ENCODE measurements at regions of chr1 and their contacts with region 1.

Region 1: GRCh38 chr1:157646144-157646543 is 48.3 kb upstream of the FCRL4 start:
- DNase-seq: no peak
- ATAC-seq: no peak
- H3K4me3 ChIP-seq: no peak overlapping the region
- H3K27ac ChIP-seq: no peak overlapping the region
- H3K4me1 ChIP-seq: no peaks in the 10 kb centered on the region
- H3K27me3 ChIP-seq: no peaks in the 10 kb centered on the region
- CTCF ChIP-seq: no peak

Region 2: DNA sequence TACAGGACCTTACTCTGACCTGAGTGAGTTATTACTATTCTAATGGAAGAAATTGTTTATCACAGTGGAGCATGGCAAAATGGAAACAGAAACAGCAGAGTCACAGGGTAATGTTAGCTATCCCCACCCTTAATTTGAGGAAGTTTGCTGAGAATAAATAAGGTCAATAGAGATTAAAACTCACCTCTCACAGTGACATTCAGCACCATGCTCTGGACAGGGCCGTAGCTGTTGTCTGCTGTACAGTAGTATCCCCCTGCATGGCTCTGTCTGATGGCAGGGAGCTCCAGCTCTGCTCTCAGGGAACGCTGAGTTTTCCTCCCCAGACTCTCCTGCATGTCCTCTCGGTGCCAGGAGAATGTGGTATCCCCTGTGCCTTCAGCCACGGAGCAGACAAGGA is 60.2 kb before region 1 on chr1:
- intact Hi-C with region 1: no loop called
- DNase-seq: no peak
- ATAC-seq: no peak
- H3K4me3 ChIP-seq: no peak overlapping the region
- H3K27ac ChIP-seq: no peak overlapping the region
- H3K4me1 ChIP-seq: no peaks in the 10 kb centered on the region
- H3K27me3 ChIP-seq: peaks cover 0 to 4% (median 2%) of the 10 kb centered on the region in 3 donors
- CTCF ChIP-seq: no peak

Region 3: DNA sequence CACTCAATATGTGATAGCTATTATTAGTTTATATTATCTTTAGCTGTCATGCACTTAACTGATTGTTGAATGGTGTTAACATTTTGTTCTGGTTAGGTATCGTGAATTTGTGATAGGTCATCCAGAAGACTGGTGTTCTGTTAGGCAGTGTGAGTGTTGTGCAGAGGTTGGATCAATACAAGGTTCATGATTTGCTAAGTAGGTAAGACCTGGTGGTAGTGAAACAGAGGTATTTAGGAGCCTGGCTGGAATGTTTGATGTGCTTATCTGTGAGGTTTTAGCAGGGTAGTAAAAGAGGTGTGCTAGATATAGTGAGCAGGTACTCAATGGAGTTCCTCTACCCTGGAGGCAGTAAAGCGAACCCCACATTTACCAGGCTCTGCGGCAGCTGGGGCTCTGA is 28.0 kb before region 1 on chr1:
- intact Hi-C with region 1: loop called in 1 of 2 experiments (anchors 1 kb)
- DNase-seq: no peak
- ATAC-seq: no peak
- H3K4me3 ChIP-seq: no peak overlapping the region
- H3K27ac ChIP-seq: no peak overlapping the region
- H3K4me1 ChIP-seq: no peaks in the 10 kb centered on the region
- H3K27me3 ChIP-seq: no peaks in the 10 kb centered on the region
- CTCF ChIP-seq: no peak

Region 4: DNA sequence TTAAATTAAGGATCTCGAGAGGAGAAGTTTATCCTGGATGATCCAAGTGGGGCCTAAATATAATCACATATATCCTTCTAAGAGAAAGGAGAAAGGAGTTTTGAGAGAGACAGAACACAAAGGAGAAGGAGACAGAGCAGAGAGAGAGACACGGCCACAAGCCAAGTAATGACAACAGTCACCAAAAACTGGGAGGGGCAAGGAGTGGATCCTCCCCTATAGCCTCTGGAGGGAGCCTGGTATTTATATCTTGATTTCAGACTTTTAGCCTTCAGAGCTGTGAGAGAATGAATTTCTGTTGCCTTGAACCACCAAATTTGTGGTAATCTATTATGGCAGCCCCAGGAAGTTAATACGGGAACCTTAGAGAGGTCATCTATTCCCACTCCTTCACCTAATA is 485.1 kb after region 1 on chr1:
- intact Hi-C with region 1: no loop called
- DNase-seq: no peak
- ATAC-seq: no peak
- H3K4me3 ChIP-seq: no peak overlapping the region
- H3K27ac ChIP-seq: no peak overlapping the region
- H3K4me1 ChIP-seq: no peaks in the 10 kb centered on the region
- H3K27me3 ChIP-seq: no peaks in the 10 kb centered on the region
- CTCF ChIP-seq: no peak